Naive thymus-derived CD4-positive, alpha-beta T cell (primary cell): ENCODE measurements at regions of chr12 and their contacts with region 1.

Region 1: GRCh38 chr12:110015132-110015531 is 15.9 kb downstream of the ANKRD13A start:
- DNase-seq: peak in 5 of 9 donors; percentile 20 to 53 (median 40)
- ATAC-seq: peak; percentile 66
- H3K4me3 ChIP-seq: no peak overlapping the region
- H3K4me3 Mint-ChIP-seq: peak overlapping the region in 7 of 10 donors; percentile 8 to 64 (median 55)
- H3K27ac ChIP-seq: peak overlapping the region; percentile 61
- H3K27ac Mint-ChIP-seq: peak overlapping the region; percentile 75 to 93 (median 85)
- H3K4me1 ChIP-seq: peaks cover 12 to 19% of the 10 kb centered on the region in 2 donors
- H3K4me1 Mint-ChIP-seq: peaks cover 15 to 42% (median 30%) of the 10 kb centered on the region in 7 donors
- H3K27me3 ChIP-seq: no peaks in the 10 kb centered on the region
- H3K27me3 Mint-ChIP-seq: no peaks in the 10 kb centered on the region

Region 2: DNA sequence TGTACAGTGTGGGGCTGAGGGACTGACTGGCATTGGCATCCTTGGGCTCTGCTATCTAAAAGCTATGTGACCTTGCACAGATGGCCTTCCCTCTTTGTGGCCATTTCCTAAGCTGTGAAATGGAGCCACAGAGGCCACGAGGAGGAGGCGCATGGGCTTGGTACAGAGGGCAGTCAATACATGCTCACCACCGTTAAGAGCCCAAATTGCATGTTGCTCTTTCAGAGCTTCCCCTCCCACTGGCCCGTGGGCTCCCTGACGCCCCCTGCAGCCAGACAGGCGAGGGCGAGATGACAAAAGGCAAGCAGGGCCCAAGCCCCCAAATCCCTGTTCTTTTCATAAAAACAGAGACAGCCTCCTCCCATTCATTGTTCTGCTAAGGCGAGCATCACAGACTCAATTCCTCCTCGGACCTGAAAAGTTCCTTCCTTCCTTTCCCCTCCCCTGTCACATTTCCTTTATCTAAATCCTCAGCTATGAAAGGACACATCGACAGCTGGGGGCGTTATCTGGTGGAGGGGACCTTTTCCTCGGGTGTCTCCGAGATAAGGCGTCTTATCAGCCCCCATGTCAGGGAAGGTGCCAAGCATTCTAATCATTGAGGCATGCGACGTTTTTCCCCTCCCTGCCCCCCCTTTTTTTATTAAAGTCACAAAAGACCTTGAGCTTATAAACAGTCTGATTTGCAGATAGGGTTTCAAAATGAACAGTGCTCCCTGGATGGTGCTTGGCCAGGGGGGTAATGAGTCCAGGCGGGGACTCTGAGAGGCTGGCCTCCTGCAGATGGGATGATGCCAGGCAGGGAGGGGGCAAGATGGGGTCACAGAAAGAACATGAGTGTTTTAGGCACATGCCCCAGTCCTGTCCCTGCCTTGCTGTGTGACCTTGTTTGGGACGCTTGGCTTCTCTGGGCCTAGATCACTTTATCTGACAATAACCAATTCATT is 275.1 kb before region 1 on chr12:
- CTCF ChIA-PET with region 1: no interaction called
- POLR2A ChIA-PET with region 1: no interaction called
- intact Hi-C with region 1: no loop called
- DNase-seq: no peak
- ATAC-seq: no peak
- H3K4me3 ChIP-seq: no peak overlapping the region
- H3K4me3 Mint-ChIP-seq: no peak overlapping the region
- H3K27ac ChIP-seq: no peak overlapping the region
- H3K27ac Mint-ChIP-seq: no peak overlapping the region
- H3K4me1 ChIP-seq: no peaks in the 10 kb centered on the region
- H3K4me1 Mint-ChIP-seq: no peaks in the 10 kb centered on the region
- H3K27me3 ChIP-seq: no peaks in the 10 kb centered on the region
- H3K27me3 Mint-ChIP-seq: peaks cover 8 to 25% (median 12%) of the 10 kb centered on the region in 5 donors

Region 3: DNA sequence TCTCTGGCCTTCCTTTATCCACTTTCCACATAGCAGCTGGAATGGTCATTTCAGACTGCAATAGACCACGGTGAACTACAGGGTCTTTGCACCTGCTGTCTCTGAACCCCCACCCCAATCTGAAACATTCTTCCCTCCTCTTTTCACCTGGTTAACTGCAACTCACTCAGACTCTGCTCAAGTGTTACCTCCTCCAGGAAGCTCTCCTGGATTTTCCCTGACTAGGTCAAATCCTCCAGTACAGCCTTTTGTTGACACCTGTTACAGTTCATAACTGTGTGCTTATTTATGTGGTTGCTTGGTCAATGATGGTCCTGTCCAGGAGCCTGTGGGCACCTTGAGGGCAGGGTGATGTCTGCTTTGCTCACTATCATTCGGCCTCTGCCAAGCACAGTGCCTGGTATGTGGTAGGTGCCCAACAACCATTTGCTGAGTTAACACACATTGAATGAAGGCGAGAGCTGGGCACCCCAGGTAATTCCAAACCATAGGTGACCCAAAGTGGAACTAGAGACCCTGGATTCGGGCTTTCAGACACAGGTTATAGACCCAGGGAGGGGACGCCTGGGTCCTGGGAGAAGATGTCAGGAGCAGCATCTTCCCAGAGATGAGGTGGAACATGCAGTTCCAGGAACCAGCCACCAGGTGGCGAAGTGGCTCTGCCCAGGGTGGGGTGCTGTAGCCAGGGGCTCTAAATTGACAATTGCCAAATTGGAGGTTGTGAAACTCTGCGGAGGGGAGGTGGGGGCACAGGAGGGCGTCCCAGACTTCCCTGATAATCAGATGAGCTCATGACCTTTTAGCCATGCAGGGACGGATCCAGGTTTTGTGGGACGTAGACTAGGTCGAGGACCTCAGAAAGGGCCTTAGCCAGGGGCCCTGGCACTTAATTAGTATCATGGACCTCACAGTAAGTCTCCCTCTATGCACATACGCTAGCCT is 210.0 kb before region 1 on chr12:
- CTCF ChIA-PET with region 1: interaction called, 3 read pairs
- POLR2A ChIA-PET with region 1: no interaction called
- intact Hi-C with region 1: loop called in 1 of 2 experiments (anchors 1 kb)
- DNase-seq: peak; percentile 44 to 73 (median 55)
- ATAC-seq: peak; percentile 90
- H3K4me3 ChIP-seq: no peak overlapping the region
- H3K4me3 Mint-ChIP-seq: no peak overlapping the region
- H3K27ac ChIP-seq: no peak overlapping the region
- H3K27ac Mint-ChIP-seq: peak overlapping the region in 2 of 9 donors; percentile 58 to 74
- H3K4me1 ChIP-seq: no peaks in the 10 kb centered on the region
- H3K4me1 Mint-ChIP-seq: peaks cover 0 to 2% (median 0%) of the 10 kb centered on the region in 7 donors
- H3K27me3 ChIP-seq: no peaks in the 10 kb centered on the region
- H3K27me3 Mint-ChIP-seq: peaks cover 0 to 4% (median 0%) of the 10 kb centered on the region in 5 donors

Region 4: DNA sequence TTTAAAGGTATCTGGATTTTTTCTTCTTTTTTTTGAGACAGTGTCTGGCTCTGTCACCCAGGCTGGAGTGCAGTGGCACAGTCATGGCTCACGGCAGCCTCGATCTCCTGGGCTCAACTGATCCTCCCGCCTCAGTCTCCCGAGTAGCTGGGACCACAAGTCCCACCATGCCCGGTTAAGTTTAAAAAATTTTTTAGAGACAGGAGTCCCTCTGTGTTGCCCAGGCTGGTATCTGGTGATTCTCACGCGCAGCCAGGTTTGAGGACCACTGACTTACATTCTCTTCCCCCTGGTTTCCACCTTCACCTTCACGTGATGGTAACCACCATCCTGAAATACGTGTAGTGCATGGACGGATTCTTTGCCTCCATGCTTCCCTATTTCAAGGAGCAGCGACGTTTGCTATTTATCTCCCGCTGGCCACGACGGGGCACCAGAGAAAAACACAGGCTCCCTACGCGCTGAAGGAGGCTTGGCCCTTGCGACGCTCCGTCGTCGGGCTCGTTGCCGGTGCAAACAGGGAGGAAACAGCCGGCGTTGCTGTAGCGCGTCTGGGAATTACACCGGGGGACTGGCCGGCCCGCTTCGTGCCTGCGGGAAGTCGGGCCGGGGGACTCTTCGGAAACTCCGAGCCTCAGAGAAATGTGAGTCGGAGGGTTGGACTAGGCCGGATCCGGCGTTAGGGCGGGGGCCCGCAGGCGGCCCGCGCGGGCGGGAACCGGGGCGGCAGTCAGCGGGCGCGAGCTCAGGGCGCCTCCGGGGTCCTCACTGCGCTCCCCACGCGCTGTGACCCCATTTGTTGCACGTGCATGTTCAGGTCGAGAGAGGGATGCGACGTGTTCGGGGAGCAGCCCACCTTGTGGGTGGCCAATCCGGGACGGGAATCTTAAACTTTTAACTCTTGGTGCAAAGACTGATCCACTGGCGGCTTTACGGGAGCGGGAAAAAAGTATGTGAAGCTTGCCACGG is 115.1 kb before region 1 on chr12 and contains the start of gene TCHP:
- CTCF ChIA-PET with region 1: no interaction called
- POLR2A ChIA-PET with region 1: no interaction called
- intact Hi-C with region 1: loop called in 1 of 2 experiments (anchors 1 kb)
- DNase-seq: peak; percentile 58 to 79 (median 75)
- ATAC-seq: peak; percentile 97
- H3K4me3 ChIP-seq: peak within 1 kb of the TSS; percentile 90
- H3K4me3 Mint-ChIP-seq: peak within 1 kb of the TSS; percentile 88 to 98 (median 93)
- H3K27ac ChIP-seq: peak within 1 kb of the TSS; percentile 74
- H3K27ac Mint-ChIP-seq: peak within 1 kb of the TSS; percentile 88 to 99 (median 93)
- H3K4me1 ChIP-seq: peaks cover 15 to 17% of the 10 kb centered on the region in 2 donors
- H3K4me1 Mint-ChIP-seq: peaks cover 17 to 33% (median 22%) of the 10 kb centered on the region in 7 donors
- H3K27me3 ChIP-seq: no peaks in the 10 kb centered on the region
- H3K27me3 Mint-ChIP-seq: no peaks in the 10 kb centered on the region
- total RNA-seq, gene TCHP: 21.7 to 40.0 (median 31.8) TPM

Region 5: DNA sequence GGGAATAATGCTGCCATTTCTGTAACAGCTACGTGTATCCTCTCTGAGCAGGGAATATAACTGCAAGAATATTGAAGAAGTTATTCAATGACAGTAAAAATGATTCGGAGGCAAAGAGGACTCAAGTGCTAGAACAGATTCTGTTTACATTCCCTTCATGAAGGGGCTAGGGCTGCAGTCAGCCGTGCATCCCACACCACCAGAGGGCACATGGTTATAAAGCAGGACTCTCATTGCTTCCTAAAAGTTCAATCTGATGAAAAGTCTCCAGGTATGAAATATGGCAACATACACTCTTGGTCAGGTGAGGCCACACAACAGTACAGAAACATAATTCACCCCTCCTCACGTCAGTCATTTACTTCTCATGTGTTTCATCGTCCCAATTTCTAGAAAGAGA is 81.1 kb before region 1 on chr12:
- CTCF ChIA-PET with region 1: interaction called, 5 read pairs
- POLR2A ChIA-PET with region 1: no interaction called
- intact Hi-C with region 1: loop called (anchors 1 kb)
- DNase-seq: no peak
- ATAC-seq: no peak
- H3K4me3 ChIP-seq: no peak overlapping the region
- H3K4me3 Mint-ChIP-seq: no peak overlapping the region
- H3K27ac ChIP-seq: no peak overlapping the region
- H3K27ac Mint-ChIP-seq: peak overlapping the region in 3 of 9 donors; percentile 8 to 32 (median 25)
- H3K4me1 ChIP-seq: no peaks in the 10 kb centered on the region
- H3K4me1 Mint-ChIP-seq: no peaks in the 10 kb centered on the region
- H3K27me3 ChIP-seq: no peaks in the 10 kb centered on the region
- H3K27me3 Mint-ChIP-seq: no peaks in the 10 kb centered on the region

Region 6: DNA sequence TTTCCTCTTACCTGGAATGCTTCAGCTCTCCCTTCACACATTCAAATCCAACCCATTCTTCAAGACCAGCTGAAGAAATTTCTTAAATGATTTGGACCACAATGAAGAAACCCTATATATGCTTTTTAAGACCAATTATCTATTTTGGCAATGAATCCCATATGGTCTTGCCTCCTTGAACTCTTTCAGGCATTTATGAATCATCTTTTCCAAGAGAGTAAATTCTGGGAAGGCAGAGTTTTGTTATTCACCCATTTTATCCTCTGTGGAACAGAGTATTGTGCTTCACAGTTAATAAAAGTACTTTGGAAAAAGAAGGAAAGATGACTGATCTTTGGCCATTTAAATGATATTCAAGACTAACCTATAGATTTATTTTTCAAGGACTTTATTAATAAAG is 32.9 kb before region 1 on chr12:
- CTCF ChIA-PET with region 1: no interaction called
- POLR2A ChIA-PET with region 1: no interaction called
- intact Hi-C with region 1: loop called in 1 of 2 experiments (anchors 5 kb)
- DNase-seq: no peak
- ATAC-seq: no peak
- H3K4me3 ChIP-seq: no peak overlapping the region
- H3K4me3 Mint-ChIP-seq: peak overlapping the region in 3 of 10 donors; percentile 12 to 54 (median 25)
- H3K27ac ChIP-seq: no peak overlapping the region
- H3K27ac Mint-ChIP-seq: peak overlapping the region in 8 of 9 donors; percentile 20 to 92 (median 74)
- H3K4me1 ChIP-seq: peaks cover 0 to 3% of the 10 kb centered on the region in 2 donors
- H3K4me1 Mint-ChIP-seq: peaks cover 20 to 48% (median 27%) of the 10 kb centered on the region in 7 donors
- H3K27me3 ChIP-seq: no peaks in the 10 kb centered on the region
- H3K27me3 Mint-ChIP-seq: no peaks in the 10 kb centered on the region